Activated T-helper 2 cell treated with anti-CD3 and anti-CD28 coated beads, Interferon-gamma antibody, Interleukin-2, Interleukin-4, amounts not matched to agents 10 μg/mL and 5 μg/mL and 100 μg/mL, durations not matched to agents 14 hours and 24 hours and 36 hours (primary cell): ENCODE measurements at regions of chr7 and their contacts with region 1.

Region 1: DNA sequence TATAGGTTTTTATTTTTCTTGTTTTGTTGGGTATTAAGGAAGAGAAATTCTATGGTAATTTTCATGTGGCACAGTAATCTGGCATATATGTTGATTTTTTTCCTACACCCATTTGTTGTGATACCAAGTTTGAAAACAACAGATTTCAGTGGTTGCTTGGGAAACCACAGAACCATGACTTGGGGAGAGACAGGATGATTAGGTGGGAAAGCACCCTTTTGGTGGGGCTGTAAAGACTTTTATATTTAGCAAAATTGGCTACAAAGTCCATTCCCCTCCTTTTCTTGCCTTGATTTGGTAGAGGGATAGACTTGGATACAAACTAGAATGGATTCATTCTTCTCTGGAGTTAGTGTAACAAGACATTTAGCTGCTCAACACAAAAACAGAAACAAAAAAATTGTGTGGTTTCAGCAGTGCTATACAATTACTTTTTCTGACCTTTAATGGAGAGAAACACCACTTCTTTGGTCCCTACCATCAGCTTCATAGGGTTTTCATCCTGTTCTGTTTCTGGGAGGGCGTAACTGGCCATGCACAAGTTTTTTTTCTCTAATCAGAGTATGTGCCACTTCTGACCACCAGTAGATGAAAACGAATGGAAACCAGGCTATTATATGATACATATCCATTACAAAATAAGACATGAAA is 52.7 kb downstream of the FIGNL1 start:
- DNase-seq: no peak
- H3K4me3 Mint-ChIP-seq: no peak overlapping the region
- H3K27ac Mint-ChIP-seq: peak overlapping the region; percentile 94
- H3K4me1 Mint-ChIP-seq: peaks cover 62% of the 10 kb centered on the region
- H3K27me3 Mint-ChIP-seq: no peaks in the 10 kb centered on the region

Region 2: GRCh38 chr7:50147951-50148808 is 249.3 kb before region 1 on chr7:
- intact Hi-C with region 1: loop called (anchors 5 kb)
- DNase-seq: no peak
- H3K4me3 Mint-ChIP-seq: peak overlapping the region; percentile 22
- H3K27ac Mint-ChIP-seq: peak overlapping the region; percentile 60
- H3K4me1 Mint-ChIP-seq: peaks cover 72% of the 10 kb centered on the region
- H3K27me3 Mint-ChIP-seq: no peaks in the 10 kb centered on the region

Region 3: GRCh38 chr7:50317221-50317678 is 80.2 kb before region 1 on chr7:
- intact Hi-C with region 1: loop called (anchors 1 kb)
- DNase-seq: peak; percentile 52
- H3K4me3 Mint-ChIP-seq: peak overlapping the region; percentile 78
- H3K27ac Mint-ChIP-seq: peak overlapping the region; percentile 92
- H3K4me1 Mint-ChIP-seq: peaks cover 90% of the 10 kb centered on the region
- H3K27me3 Mint-ChIP-seq: no peaks in the 10 kb centered on the region

Region 4: DNA sequence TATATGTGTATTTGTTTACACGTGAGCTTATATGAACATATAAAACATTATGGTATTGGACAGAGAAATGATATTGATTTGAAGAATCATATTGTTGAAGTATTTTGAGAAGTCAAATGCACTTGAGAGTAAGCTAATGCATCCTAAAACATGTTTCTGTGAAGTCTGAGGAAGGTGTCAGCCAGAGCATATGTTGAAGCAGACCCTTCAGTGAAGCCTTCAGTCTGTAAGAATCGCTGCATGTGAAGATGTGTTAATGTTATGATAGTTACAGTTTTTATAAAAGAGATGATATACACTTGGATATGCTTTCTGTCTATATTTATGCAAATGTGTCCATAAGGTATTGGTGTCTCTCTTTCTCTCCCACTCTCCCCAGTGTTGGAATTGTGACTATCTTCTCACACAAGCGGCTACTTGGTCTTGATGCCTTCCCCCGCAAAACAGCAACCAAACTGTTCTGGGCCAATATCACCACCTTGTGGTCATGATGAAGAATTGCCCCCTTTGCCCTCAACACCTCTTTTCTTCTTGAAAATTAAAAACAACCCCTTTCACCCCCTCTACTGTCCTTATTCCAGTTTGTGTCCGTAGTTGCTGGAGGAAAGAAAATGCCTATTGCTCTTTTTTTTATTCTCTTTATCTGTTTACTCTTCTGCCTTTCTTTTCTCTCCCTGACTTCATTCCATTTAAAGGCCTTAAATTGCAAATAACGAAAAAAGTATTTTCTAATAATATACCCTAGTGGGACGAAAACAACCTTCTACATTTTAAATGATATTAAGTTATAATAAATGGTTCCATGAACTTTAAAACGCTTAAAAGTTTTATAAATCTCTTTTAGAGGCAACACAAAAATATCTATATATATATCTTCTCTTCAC is 28.1 kb before region 1 on chr7:
- intact Hi-C with region 1: loop called (anchors 1 kb)
- DNase-seq: no peak
- H3K4me3 Mint-ChIP-seq: peak overlapping the region; percentile 45
- H3K27ac Mint-ChIP-seq: peak overlapping the region; percentile 94
- H3K4me1 Mint-ChIP-seq: peaks cover 95% of the 10 kb centered on the region
- H3K27me3 Mint-ChIP-seq: no peaks in the 10 kb centered on the region

Region 5: GRCh38 chr7:50379539-50379938 is 17.9 kb before region 1 on chr7:
- intact Hi-C with region 1: no loop called
- DNase-seq: no peak
- H3K4me3 Mint-ChIP-seq: no peak overlapping the region
- H3K27ac Mint-ChIP-seq: peak overlapping the region; percentile 69
- H3K4me1 Mint-ChIP-seq: peaks cover 70% of the 10 kb centered on the region
- H3K27me3 Mint-ChIP-seq: no peaks in the 10 kb centered on the region

Region 6: GRCh38 chr7:50409856-50410745 is 12.7 kb after region 1 on chr7:
- intact Hi-C with region 1: no loop called
- DNase-seq: no peak
- H3K4me3 Mint-ChIP-seq: no peak overlapping the region
- H3K27ac Mint-ChIP-seq: no peak overlapping the region
- H3K4me1 Mint-ChIP-seq: peaks cover 33% of the 10 kb centered on the region
- H3K27me3 Mint-ChIP-seq: no peaks in the 10 kb centered on the region

Region 7: GRCh38 chr7:50449881-50450589 is 52.6 kb after region 1 on chr7 and contains the start of gene FIGNL1:
- intact Hi-C with region 1: loop called (anchors 1 kb)
- DNase-seq: peak; percentile 81
- H3K4me3 Mint-ChIP-seq: peak within 1 kb of the TSS; percentile 86
- H3K27ac Mint-ChIP-seq: peak within 1 kb of the TSS; percentile 71
- H3K4me1 Mint-ChIP-seq: peaks cover 41% of the 10 kb centered on the region
- H3K27me3 Mint-ChIP-seq: no peaks in the 10 kb centered on the region
- total RNA-seq, gene FIGNL1: 40.0 and 42.5 TPM in 2 replicates